Posterior vena cava (tissue), 2 donors: ENCODE measurements at regions of chr18 and their contacts with region 1.

Region 1: DNA sequence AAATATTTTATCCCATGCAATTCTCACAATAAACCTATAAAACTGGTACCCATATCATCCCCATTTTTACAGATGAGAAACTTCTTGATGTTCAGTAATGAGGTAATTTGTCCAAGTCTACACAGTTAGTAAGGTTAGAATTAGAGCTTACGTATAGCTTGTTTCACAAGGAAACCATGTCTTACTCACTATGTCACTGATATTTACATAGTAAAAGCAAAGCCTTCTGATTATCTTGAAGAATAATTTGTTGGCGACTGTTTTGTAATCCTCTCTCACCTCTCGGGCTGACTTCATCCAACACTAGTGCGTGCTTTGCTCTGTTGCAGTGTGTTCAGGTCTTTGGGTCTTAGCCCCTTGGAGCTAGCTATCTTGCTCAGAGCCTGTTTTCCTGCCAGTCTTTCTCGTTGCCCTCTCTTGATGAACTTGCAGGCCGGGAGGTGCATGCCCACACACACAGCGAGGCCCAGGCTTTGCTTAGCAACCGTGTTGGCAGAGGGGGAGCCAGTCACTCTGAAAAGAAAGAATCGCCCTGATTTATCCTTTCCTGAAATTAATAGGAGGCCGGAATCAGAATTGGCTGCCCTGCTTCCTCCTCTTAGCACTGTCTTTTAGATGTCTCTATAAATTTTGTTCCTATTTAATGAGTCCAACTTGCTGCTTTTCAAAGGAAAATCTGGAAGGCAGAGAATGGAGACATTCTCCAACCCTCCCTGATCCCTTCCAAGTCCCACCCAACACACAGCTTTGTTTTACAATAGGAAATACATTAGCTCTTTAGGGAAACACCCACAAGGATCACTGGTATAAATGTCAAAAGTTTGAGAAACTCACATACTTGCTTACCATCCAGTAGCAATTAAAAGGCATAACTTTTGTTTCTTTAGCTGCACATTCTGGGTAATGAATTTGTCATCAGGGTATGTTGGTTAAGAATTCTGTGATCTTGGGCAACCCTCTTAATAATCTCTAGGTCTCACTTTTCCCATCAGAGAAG is 97.6 kb upstream of the SEC11C start:
- DNase-seq: no peak

Region 2: DNA sequence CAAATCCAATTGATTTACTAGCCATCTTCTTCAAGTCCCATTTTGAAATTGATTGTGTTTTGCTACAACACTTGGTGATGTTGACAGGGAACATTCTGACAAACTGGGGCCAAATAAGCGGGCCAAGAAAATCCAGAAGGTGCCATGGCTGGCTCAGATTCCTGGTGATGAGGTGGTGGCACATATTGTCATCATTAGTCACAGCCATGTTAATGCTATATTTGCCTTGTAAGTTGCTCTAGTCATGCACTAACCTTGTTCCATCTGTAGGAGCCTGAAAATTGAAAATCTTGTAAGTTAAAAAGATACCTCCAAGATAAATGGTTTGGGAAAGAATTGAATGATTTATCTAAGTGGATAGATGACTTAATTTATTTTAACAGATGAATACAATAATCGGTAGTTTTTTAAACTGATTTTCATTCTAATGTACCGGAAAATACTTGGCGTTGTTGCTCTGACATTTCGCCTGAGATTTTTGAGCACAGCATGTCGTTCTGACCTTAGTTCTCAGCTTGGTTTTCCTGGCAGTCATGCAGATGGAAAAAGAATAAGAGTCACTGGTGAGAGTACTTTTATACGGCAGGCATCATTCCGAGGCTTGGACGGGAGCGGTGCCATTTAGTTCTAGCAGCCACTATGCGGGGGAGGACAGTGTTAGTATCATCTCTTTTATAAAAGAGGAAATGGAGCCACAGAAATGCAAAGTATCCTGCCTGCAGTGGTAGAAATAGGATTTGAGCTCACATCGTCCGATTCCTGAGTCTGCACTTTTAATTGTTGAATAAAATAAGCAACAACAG is 43.5 kb before region 1 on chr18:
- intact Hi-C with region 1: loop called in 1 of 2 experiments (anchors 10 kb)
- DNase-seq: peak; percentile 94

Region 3: GRCh38 chr18:59005262-59005661 is 36.9 kb before region 1 on chr18:
- intact Hi-C with region 1: loop called in 1 of 2 experiments (anchors 5 kb)
- DNase-seq: no peak